ENCODE measurements at regions of chr12 and their contacts with region 1.

Region 1: DNA sequence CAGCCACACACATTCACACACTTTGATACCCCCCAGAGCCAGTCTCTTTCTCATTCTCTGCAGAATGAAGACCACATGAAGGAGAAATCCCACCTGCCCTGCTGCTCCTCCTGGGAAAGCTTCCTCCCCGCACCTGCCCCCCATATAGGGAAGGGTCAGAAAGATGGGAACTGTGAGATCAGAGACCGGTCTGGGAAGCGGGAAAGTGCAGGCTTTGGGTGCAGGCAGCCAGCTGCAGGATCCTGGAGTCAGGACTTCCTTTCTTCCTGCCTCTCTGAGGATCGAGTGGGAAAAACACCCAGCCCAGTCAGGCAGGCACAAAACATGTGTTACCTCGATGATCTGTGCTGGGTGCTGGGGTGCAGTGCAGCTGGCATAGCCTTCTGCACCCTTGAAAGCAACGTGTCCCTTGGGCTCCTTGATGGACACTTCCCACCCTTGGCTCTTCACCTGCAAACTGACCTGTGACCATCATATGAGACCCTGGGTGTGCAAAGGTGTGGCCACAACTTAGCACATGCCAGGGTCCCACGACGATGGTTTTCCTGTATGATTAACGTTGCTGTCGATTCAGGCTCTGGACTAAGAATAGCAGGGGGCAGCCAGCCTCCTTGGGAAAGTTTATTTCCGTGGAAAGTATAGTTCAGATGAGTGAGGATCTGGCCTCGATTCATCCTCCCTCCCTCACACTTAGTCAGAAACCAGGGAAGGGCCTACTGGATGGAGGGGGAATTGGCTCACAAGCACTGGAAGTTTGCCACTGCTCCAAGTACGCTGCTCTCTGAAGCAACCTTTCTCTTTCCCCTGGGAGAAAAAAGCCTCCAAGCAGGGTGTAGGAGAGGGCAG is 105.4 kb upstream of the MED13L start:
- DNase-seq: peak; percentile 97
- H3K4me3 ChIP-seq: peak overlapping the region; percentile 44
- CTCF ChIP-seq: peak; percentile 23

Region 2: GRCh38 chr12:116369921-116370404 is 12.9 kb before region 1 on chr12:
- CTCF ChIA-PET with region 1: interaction called, 3 read pairs
- POLR2A ChIA-PET with region 1: interaction called, 12 read pairs
- DNase-seq: no peak
- H3K4me3 ChIP-seq: no peak overlapping the region
- CTCF ChIP-seq: no peak

Region 3: GRCh38 chr12:116434155-116435011 is 51.5 kb after region 1 on chr12:
- CTCF ChIA-PET with region 1: interaction called, 3 read pairs
- POLR2A ChIA-PET with region 1: interaction called, 10 read pairs
- DNase-seq: peak; percentile 67
- H3K4me3 ChIP-seq: peak overlapping the region; percentile 57
- CTCF ChIP-seq: no peak

Region 4: GRCh38 chr12:116484807-116485206 is 101.9 kb after region 1 on chr12:
- CTCF ChIA-PET with region 1: no interaction called
- POLR2A ChIA-PET with region 1: no interaction called
- DNase-seq: no peak
- H3K4me3 ChIP-seq: no peak overlapping the region
- CTCF ChIP-seq: no peak